ENCODE measurements at regions of chr15 and their contacts with region 1.

Region 1: GRCh38 chr15:45587095-45587860 is at the start of gene BLOC1S6:
- DNase-seq: peak; percentile 89 to 93 (median 92)
- ATAC-seq: peak; percentile 92 to 95 (median 94)
- H3K4me3 ChIP-seq: peak within 1 kb of the TSS; percentile 72 to 98 (median 92)
- H3K27ac ChIP-seq: peak within 1 kb of the TSS; percentile 94 to 99 (median 98)
- H3K4me1 ChIP-seq: peaks cover 6 to 55% (median 32%) of the 10 kb centered on the region in 12 donors
- H3K27me3 ChIP-seq: no peaks in the 10 kb centered on the region
- CTCF ChIP-seq: no peak
- POLR2A ChIP-seq: peak in 1 of 2 donors; percentile 63
- total RNA-seq, gene BLOC1S6: 21.4 to 38.9 (median 27.0) TPM

Region 2: GRCh38 chr15:45198337-45199135 is 388.7 kb before region 1 on chr15:
- intact Hi-C with region 1: loop called in 1 of 10 experiments (anchors 5 kb)
- DNase-seq: peak; percentile 92 to 97 (median 95)
- ATAC-seq: peak; percentile 77 to 84 (median 80)
- H3K4me3 ChIP-seq: peak overlapping the region; percentile 25 to 85 (median 70)
- H3K27ac ChIP-seq: peak overlapping the region; percentile 94 to 99 (median 98)
- H3K4me1 ChIP-seq: peaks cover 0 to 43% (median 6%) of the 10 kb centered on the region in 12 donors
- H3K27me3 ChIP-seq: no peaks in the 10 kb centered on the region
- CTCF ChIP-seq: peak in 11 of 12 donors; percentile 52 to 92 (median 71)
- POLR2A ChIP-seq: peak in 1 of 2 donors; percentile 96

Region 3: GRCh38 chr15:45522328-45523160 is 64.7 kb before region 1 on chr15 and contains the start of gene SLC30A4:
- intact Hi-C with region 1: loop called (anchors 1 to 5 kb)
- DNase-seq: peak; percentile 71 to 87 (median 75)
- ATAC-seq: peak; percentile 86 to 98 (median 95)
- H3K4me3 ChIP-seq: peak within 1 kb of the TSS; percentile 71 to 98 (median 89)
- H3K27ac ChIP-seq: peak within 1 kb of the TSS; percentile 69 to 90 (median 84)
- H3K4me1 ChIP-seq: peaks cover 0 to 29% (median 15%) of the 10 kb centered on the region in 12 donors
- H3K27me3 ChIP-seq: peaks cover 0 to 9% (median 0%) of the 10 kb centered on the region in 9 donors
- CTCF ChIP-seq: peak in 11 of 12 donors; percentile 33 to 74 (median 51)
- POLR2A ChIP-seq: peak in 1 of 2 donors; percentile 75
- total RNA-seq, gene SLC30A4: 2.5 to 4.7 (median 3.4) TPM

Region 4: GRCh38 chr15:45529613-45530012 is 57.7 kb before region 1 on chr15:
- intact Hi-C with region 1: loop called in 6 of 10 experiments (anchors 5 kb)
- DNase-seq: peak in 3 of 5 donors; percentile 10 to 54 (median 28)
- ATAC-seq: peak in 3 of 4 donors; percentile 45 to 70 (median 60)
- H3K4me3 ChIP-seq: no peak overlapping the region
- H3K27ac ChIP-seq: no peak overlapping the region
- H3K4me1 ChIP-seq: no peaks in the 10 kb centered on the region
- H3K27me3 ChIP-seq: peaks cover 0 to 4% (median 0%) of the 10 kb centered on the region in 9 donors
- CTCF ChIP-seq: no peak
- POLR2A ChIP-seq: no peak

Region 5: GRCh38 chr15:45634442-45635190 is 47.3 kb after region 1 on chr15 and contains the start of gene SQOR:
- intact Hi-C with region 1: loop called in 2 of 10 experiments (anchors 5 kb)
- DNase-seq: peak; percentile 86 to 93 (median 91)
- ATAC-seq: peak; percentile 79 to 93 (median 90)
- H3K4me3 ChIP-seq: peak within 1 kb of the TSS; percentile 31 to 95 (median 83)
- H3K27ac ChIP-seq: peak within 1 kb of the TSS; percentile 66 to 97 (median 91)
- H3K4me1 ChIP-seq: peaks cover 0 to 66% (median 26%) of the 10 kb centered on the region in 12 donors
- H3K27me3 ChIP-seq: no peaks in the 10 kb centered on the region
- CTCF ChIP-seq: no peak
- POLR2A ChIP-seq: peak in 1 of 2 donors; percentile 84
- total RNA-seq, gene SQOR: 14.8 to 60.9 (median 18.5) TPM